PC-9 (cell line): ENCODE measurements at regions of chr7 and their contacts with region 1.

Region 1: DNA sequence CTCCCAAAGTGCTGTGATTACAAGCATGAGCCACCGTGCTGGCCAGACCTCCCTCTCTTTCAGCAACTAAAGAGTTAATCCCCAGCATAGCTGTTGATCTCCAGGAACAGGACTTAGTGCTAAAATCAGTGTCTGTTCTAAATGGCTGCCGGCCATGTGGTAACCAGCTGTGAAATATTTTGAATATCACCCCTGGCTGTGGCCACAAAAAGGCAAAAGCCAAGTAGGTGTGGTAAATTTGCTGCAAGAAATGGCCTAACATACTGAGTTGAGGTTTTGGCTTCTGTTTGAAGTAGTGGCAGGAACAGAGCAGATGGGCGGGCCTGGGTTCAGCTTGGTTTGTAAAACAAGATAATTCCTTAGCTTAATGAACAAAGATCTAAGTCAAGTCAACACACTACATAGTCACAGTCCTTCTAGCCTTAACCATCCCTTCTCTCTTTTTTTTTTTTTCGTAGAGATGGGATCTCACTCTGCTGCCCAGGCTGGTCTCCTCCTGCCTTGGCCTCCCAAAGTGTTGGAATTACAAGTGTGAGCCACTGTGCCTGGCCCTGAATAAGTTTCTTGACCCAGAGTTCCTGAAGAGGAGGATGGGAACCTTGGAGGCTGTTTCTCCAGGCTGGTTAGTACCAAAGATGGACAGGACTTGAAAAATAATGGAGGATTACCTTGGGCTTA is 22.7 kb upstream of the AGFG2 start:
- DNase-seq: peak; percentile 60 to 79
- H3K4me3 ChIP-seq: no peak overlapping the region
- H3K27ac ChIP-seq: no peak overlapping the region
- H3K4me1 ChIP-seq: peaks cover 25% of the 10 kb centered on the region
- H3K27me3 ChIP-seq: no peaks in the 10 kb centered on the region
- CTCF ChIP-seq: no peak

Region 2: GRCh38 chr7:100489824-100490223 is 26.4 kb before region 1 on chr7:
- CTCF ChIA-PET with region 1: no interaction called
- POLR2A ChIA-PET with region 1: interaction called, 14 read pairs
- intact Hi-C with region 1: no loop called
- DNase-seq: peak; percentile 40 to 63
- H3K4me3 ChIP-seq: no peak overlapping the region
- H3K27ac ChIP-seq: no peak overlapping the region
- H3K4me1 ChIP-seq: no peaks in the 10 kb centered on the region
- H3K27me3 ChIP-seq: no peaks in the 10 kb centered on the region
- CTCF ChIP-seq: no peak

Region 3: GRCh38 chr7:100799014-100799896 is 283.0 kb after region 1 on chr7:
- CTCF ChIA-PET with region 1: no interaction called
- POLR2A ChIA-PET with region 1: no interaction called
- intact Hi-C with region 1: no loop called
- DNase-seq: peak in 1 of 2 experiments; percentile 60
- H3K4me3 ChIP-seq: no peak overlapping the region
- H3K27ac ChIP-seq: no peak overlapping the region
- H3K4me1 ChIP-seq: peaks cover 60% of the 10 kb centered on the region
- H3K27me3 ChIP-seq: no peaks in the 10 kb centered on the region
- CTCF ChIP-seq: peak; percentile 74

Region 4: DNA sequence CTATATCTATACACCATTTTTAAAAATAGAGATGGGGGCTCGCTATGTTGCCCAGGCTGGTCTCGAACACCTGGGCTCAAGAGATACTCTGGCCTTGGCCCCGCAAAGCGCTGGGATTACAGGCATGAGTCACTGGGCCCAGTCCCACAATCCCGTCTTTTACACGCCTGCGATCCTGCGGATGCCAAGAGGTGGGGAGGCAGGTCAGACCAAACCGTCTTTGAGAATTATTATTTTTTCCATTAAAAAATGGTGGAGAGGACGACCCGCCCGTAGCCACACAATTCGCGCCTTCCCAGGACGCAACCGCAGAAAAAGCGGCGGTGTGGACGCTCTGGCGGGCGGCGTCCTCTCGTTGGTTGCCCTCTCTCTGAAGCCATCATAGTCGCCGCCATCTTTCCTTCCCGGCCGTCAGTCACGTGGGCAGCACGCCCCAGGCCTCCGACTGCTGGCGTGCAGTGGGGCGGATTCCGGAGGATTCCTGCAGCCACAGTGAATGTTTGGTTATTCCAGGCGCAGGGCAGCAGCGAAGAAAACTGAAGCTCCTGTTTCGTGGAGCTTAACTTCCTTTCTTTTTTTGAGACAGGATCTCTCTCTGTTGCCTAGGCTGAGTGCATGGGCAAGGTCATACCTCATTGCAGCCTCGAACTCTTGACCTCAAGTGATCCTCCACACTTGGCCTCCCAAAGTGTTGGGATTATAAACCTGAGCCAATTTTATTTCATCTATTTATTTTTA is 321.0 kb after region 1 on chr7:
- CTCF ChIA-PET with region 1: no interaction called
- POLR2A ChIA-PET with region 1: no interaction called
- intact Hi-C with region 1: no loop called
- DNase-seq: peak; percentile 46 to 91
- H3K4me3 ChIP-seq: peak overlapping the region; percentile 33; the same call in 1 of the 2 replicates
- H3K27ac ChIP-seq: no peak overlapping the region
- H3K4me1 ChIP-seq: no peaks in the 10 kb centered on the region
- H3K27me3 ChIP-seq: no peaks in the 10 kb centered on the region
- CTCF ChIP-seq: no peak